Caco-2 (cell line): ENCODE measurements at regions of chr7 and their contacts with region 1.

Region 1: GRCh38 chr7:94907026-94907810 is at the start of gene PPP1R9A:
- DNase-seq: peak; percentile 82
- H3K4me3 ChIP-seq: peak within 1 kb of the TSS; percentile 79
- H3K4me3 Mint-ChIP-seq: peak within 1 kb of the TSS; percentile 79
- H3K27ac Mint-ChIP-seq: peak within 1 kb of the TSS; percentile 89
- H3K4me1 ChIP-seq: peaks cover 10% of the 10 kb centered on the region
- H3K4me1 Mint-ChIP-seq: no peaks in the 10 kb centered on the region
- H3K27me3 ChIP-seq: no peaks in the 10 kb centered on the region
- H3K27me3 Mint-ChIP-seq: no peaks in the 10 kb centered on the region
- CTCF ChIP-seq: peak; percentile 30 to 68
- total RNA-seq, gene PPP1R9A: 37.2 and 37.4 TPM in 2 replicates

Region 2: GRCh38 chr7:94980418-94981142 is 73.4 kb after region 1 on chr7:
- CTCF ChIA-PET with region 1: no interaction called
- POLR2A ChIA-PET with region 1: no interaction called
- intact Hi-C with region 1: loop called (anchors 1 kb)
- DNase-seq: peak; percentile 72 to 80
- H3K4me3 ChIP-seq: no peak overlapping the region
- H3K4me3 Mint-ChIP-seq: peak overlapping the region; percentile 36
- H3K27ac Mint-ChIP-seq: peak overlapping the region; percentile 78
- H3K4me1 ChIP-seq: peaks cover 17% of the 10 kb centered on the region
- H3K4me1 Mint-ChIP-seq: no peaks in the 10 kb centered on the region
- H3K27me3 ChIP-seq: no peaks in the 10 kb centered on the region
- H3K27me3 Mint-ChIP-seq: no peaks in the 10 kb centered on the region
- CTCF ChIP-seq: no peak

Region 3: DNA sequence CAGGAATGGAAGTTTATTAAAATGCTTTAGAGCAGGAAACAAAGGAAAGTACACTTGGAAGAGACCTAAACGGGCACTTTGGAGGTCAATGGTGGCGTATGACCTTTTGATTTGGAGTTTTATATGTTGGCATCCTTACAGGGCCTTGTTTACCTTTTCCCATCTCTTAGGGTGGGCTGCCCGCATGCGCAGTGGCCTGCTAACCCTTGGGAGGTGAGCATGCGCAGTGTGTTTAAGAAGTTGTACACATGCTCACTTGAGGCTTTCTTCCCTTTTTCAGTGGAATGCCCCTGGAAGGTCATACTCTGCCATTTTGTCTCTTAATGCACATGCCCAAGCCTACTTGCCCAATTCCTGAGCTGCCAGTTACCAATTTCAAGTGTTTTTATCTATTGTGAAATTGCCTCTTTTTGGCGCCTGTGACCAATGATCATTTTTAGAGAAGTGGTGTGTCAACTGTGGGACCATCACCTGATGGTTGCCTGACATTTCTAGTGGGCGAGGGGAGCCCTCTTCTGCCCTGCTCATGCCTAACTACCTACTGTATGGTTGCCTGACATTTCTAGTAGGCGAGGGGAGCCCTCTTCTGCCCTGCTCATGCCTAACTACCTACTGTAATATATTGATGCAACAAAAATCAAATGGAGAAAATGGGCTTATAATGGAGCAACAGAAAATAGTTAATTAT is 138.2 kb after region 1 on chr7:
- CTCF ChIA-PET with region 1: no interaction called
- POLR2A ChIA-PET with region 1: no interaction called
- intact Hi-C with region 1: loop called (anchors 1 kb)
- DNase-seq: peak; percentile 63
- H3K4me3 ChIP-seq: no peak overlapping the region
- H3K4me3 Mint-ChIP-seq: no peak overlapping the region
- H3K27ac Mint-ChIP-seq: no peak overlapping the region
- H3K4me1 ChIP-seq: peaks cover 5% of the 10 kb centered on the region; the same call in 1 of the 2 replicates
- H3K4me1 Mint-ChIP-seq: no peaks in the 10 kb centered on the region
- H3K27me3 ChIP-seq: no peaks in the 10 kb centered on the region
- H3K27me3 Mint-ChIP-seq: no peaks in the 10 kb centered on the region
- CTCF ChIP-seq: peak; percentile 17 to 59

Region 4: DNA sequence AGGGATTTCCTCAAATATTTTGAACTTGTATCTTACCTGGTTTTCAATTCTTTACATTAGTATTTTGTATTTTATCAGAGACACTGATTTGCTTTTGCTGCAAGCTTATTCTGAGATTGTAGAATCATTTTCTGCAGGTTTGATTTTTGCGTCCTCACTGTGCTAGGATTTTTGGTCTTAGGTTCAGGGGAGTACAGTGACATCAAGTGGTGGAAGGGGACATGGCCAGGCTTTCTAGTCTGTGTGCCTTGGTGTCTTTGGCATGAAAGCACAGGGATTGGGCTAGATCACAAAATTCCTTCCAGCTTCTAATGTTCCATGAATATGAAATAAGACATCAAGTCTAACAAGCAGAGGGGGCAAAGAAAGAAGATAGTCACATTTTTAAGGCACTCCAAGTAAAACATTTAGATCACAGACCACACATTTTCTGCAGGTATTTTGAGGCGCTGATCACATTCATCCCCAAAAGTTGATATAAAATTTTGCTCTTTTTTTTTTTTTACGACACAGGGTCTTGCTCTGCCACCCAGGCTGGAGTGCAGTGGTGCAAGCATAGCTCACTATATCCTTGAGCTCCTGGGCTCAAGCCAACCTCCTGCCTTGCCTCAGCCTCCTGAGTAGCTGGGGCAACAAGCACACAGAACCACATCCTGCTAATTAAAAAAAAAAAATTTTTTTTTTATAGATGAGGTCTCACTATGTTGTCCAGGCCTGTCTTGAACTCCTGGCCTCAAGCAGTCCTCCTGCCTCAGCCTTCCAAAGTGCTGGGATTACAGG is 292.8 kb after region 1 on chr7:
- CTCF ChIA-PET with region 1: no interaction called
- POLR2A ChIA-PET with region 1: no interaction called
- intact Hi-C with region 1: loop called (anchors 2 kb)
- DNase-seq: peak in 1 of 2 experiments; percentile 48
- H3K4me3 ChIP-seq: no peak overlapping the region
- H3K4me3 Mint-ChIP-seq: no peak overlapping the region
- H3K27ac Mint-ChIP-seq: no peak overlapping the region
- H3K4me1 ChIP-seq: no peaks in the 10 kb centered on the region
- H3K4me1 Mint-ChIP-seq: no peaks in the 10 kb centered on the region
- H3K27me3 ChIP-seq: no peaks in the 10 kb centered on the region
- H3K27me3 Mint-ChIP-seq: no peaks in the 10 kb centered on the region
- CTCF ChIP-seq: peak; percentile 63 to 88